OCI-LY7 (cell line): ENCODE measurements at regions of chr1 and their contacts with region 1.

Region 1: DNA sequence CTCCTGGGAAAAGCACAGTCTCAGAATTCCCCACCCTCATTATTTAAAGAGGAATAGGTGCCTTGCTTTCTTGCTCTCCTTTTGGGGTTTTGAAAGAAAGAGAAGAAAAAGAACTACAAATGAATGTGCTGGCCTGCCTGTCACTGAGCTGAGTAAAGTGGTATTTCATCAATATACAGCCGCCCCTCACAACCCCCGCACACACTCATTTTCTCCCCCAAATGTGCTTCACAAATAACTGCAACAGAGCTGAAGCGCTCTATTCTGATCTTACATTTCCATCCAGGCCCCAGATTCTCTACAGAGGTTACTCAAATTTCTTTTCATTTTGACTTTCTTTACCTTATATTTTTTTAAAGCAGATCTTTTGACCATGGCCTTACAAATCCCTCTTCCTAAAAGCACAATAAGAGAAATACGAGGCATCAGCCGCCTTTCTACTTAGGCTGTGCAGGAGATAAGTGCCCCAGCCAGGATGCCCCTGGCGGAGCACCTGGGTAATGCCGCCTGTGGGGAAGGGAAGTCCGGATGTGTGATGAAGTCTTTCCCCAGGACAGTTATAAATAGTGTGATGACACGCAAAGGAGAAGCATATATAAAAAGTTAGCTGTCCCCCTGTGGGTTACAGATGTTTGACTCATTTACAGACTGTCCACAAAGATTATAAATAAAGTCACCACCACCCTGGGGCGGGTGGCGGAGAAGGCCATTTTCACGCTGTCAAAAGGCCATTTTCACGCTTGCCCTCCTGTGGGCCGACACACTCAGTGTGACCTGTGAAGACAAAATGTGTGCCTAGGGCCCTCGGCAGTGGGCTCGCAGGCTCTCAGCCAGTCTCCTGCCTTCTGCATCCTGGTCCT is 6.5 kb downstream of the KCNN3 start:
- DNase-seq: peak; percentile 83
- H3K4me3 ChIP-seq: peak overlapping the region; percentile 59
- H3K27ac ChIP-seq: peak overlapping the region; percentile 91
- H3K4me1 ChIP-seq: peaks cover 98% of the 10 kb centered on the region
- CTCF ChIP-seq: peak; percentile 93

Region 2: GRCh38 chr1:154806333-154806732 is 57.2 kb before region 1 on chr1:
- CTCF ChIA-PET with region 1: interaction called, 3 read pairs
- POLR2A ChIA-PET with region 1: interaction called, 3 read pairs
- intact Hi-C with region 1: loop called (anchors 1 kb)
- DNase-seq: peak; percentile 4
- H3K4me3 ChIP-seq: no peak overlapping the region
- H3K27ac ChIP-seq: no peak overlapping the region
- H3K4me1 ChIP-seq: peaks cover 39% of the 10 kb centered on the region
- CTCF ChIP-seq: no peak

Region 3: DNA sequence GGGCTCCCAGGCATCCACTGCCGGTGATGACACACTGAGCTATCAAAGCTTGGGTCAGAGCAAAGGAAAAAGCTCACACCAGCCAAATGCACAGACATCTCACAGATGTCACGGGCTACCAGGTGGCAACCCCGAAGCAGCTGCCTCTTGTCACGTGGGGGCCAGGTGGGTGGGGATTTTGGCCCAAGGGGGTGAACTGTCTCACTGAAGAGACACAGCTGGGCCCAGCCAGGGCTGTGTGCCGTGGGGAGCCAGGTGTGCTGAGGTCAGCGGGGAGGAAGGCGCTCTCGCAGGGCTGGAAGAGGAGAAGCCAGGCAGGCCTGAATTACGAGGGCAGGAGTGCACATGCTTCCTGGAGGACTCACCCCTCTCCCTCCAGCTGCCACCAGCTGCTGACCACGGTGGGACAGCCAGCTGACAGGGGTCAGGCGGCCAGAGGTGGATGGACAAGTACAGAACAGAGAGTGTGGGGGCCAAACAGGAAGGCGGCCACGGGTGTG is 25.8 kb before region 1 on chr1:
- CTCF ChIA-PET with region 1: interaction called, 10 read pairs
- POLR2A ChIA-PET with region 1: interaction called, 43 read pairs
- intact Hi-C with region 1: loop called (anchors 1 kb)
- DNase-seq: peak; percentile 95
- H3K4me3 ChIP-seq: no peak overlapping the region
- H3K27ac ChIP-seq: peak overlapping the region; percentile 46
- H3K4me1 ChIP-seq: peaks cover 69% of the 10 kb centered on the region
- CTCF ChIP-seq: no peak